GM13976 (cell line): ENCODE measurements at regions of chr15 and their contacts with region 1.

Region 1: DNA sequence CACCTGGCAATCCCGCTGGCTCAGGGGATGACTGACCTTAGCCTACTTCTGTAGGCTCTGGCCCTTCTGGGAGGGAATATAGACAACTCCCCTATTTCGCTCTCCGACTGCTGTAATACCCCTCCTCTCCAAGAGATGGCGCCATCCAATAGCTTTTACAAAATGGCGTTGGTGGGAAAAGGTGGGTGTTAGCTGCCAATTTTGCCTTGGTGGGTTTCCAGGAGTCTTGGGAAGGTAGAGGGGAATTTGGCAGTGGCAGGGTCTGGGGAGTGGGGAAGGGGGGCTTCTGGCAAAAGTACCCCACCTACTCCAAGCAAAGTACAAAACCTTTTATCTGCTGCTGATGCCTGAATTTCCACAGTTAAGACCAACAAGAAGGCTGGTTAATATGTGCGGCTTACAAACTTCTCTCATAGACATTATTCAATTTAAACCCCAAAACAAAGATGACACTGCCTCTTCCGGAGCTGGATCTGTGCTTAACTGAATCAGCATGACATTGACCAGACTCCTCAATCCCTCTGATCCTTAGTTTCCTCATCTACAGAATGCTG is 62.1 kb downstream of the RASGRF1 start:
- DNase-seq: peak; percentile 80
- CTCF ChIP-seq: peak; percentile 87

Region 2: DNA sequence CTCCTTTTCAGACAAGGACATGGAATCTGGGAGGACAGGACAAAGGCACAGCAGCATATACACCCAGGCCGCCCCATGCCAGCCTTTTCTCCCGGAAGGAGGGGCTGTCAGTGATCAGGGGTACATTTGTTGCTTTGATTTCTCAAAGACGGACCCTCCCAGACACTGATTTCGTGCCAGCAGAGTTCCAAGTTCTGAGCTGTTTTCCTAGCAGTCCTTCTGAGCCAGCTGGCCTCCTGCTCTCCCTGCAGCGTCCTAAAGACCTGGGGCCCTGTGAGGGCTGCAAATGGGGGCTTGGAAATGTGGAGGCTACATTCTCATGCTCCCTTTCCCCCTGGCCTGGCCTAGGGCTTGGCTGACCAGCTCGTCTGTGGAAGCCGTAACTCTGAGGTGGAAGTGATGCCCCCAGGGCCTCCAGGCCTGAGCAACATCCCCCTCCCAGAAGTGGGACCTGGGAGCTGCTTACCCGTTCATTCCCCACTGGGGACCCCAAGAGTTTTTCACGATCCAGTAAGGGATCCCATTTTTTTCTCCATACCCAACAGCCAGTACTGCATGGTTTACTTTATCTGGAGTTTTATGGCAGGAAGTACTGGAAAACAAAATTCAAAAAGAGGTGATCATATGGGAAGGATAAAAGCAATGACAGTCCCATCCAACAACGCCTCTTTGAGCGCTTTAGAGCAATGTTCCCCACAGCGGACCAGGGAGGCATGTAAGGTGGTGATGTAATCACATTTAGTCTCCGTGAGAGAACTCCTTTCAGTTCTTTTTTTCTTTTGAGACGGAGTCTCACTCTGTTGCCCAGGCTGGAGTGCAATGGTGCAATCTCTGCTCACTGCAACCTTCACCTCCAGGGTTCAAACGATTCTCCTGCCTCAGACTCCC is 105.7 kb before region 1 on chr15:
- in situ Hi-C with region 1: loop called (anchors 5 kb)
- DNase-seq: no peak
- CTCF ChIP-seq: no peak

Region 3: GRCh38 chr15:79179108-79179561 is 150.6 kb after region 1 on chr15:
- in situ Hi-C with region 1: loop called (anchors 5 kb)
- DNase-seq: no peak
- CTCF ChIP-seq: no peak